Mammary epithelial cell (primary cell): ENCODE measurements at regions of chr19 and their contacts with region 1.

Region 1: GRCh38 chr19:57992841-57993240 is 9.8 kb downstream of the ZNF606 start:
- DNase-seq: no peak
- H3K4me3 ChIP-seq: no peak overlapping the region
- H3K27ac ChIP-seq: no peak overlapping the region
- H3K4me1 ChIP-seq: no peaks in the 10 kb centered on the region
- H3K27me3 ChIP-seq: no peaks in the 10 kb centered on the region
- CTCF ChIP-seq: no peak

Region 2: GRCh38 chr19:57888560-57889231 is 104.1 kb before region 1 on chr19 and contains the start of gene ZNF814:
- CTCF ChIA-PET with region 1: no interaction called
- dilution Hi-C with region 1: no loop called
- in situ Hi-C with region 1: no loop called
- intact Hi-C with region 1: no loop called
- DNase-seq: peak; percentile 74
- H3K4me3 ChIP-seq: peak within 1 kb of the TSS; percentile 71 to 81 (median 74)
- H3K27ac ChIP-seq: peak within 1 kb of the TSS; percentile 53
- H3K4me1 ChIP-seq: no peaks in the 10 kb centered on the region
- H3K27me3 ChIP-seq: no peaks in the 10 kb centered on the region
- CTCF ChIP-seq: peak in 1 of 2 donors; percentile 52
- total RNA-seq, gene ZNF814: 4.3 to 11.7 TPM

Region 3: GRCh38 chr19:57954996-57955395 is 37.8 kb before region 1 on chr19:
- CTCF ChIA-PET with region 1: no interaction called
- dilution Hi-C with region 1: no loop called
- in situ Hi-C with region 1: no loop called
- intact Hi-C with region 1: no loop called
- DNase-seq: no peak
- H3K4me3 ChIP-seq: no peak overlapping the region
- H3K27ac ChIP-seq: no peak overlapping the region
- H3K4me1 ChIP-seq: no peaks in the 10 kb centered on the region
- H3K27me3 ChIP-seq: no peaks in the 10 kb centered on the region
- CTCF ChIP-seq: no peak

Region 4: DNA sequence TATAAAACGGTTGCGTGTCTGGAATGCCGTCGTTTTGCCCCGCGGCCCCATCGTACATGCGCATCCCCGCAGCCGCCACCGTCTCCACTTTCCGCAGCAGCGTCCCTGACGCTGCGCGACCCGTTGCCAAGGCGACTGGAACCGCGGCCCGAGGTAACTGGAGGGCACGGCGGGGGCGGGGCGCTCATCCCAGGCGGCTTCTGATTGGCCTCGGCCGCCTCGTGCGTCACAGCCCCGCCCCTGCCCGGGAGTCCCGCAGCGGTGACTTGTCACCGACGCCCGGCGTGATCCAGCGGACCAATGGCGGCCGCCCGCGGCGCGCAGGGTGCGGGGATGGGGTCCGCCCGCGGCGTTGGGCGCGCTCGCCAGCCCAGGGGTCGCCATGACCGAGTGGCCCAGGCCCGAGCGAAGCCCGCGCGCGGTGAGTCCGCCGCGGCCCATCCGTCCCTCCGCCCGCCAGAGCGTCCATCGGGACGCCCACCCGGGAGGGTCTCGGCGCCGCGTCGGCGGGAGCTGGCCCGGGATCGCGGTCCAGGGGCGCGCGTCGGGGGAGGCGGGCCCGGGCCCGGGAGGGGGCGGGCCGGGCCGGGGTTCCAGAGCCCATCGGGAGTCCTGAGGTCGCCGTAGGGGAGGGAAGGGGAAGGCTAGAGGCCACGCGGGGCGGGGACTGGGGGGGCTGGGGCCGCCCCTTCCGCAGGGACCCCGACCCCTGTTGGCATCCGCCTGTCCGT is 41.1 kb after region 1 on chr19 and contains the start of gene ZSCAN1:
- CTCF ChIA-PET with region 1: no interaction called
- dilution Hi-C with region 1: no loop called
- in situ Hi-C with region 1: no loop called
- intact Hi-C with region 1: no loop called
- DNase-seq: peak; percentile 11
- H3K4me3 ChIP-seq: no peak within 1 kb of the TSS
- H3K27ac ChIP-seq: no peak within 1 kb of the TSS
- H3K4me1 ChIP-seq: no peaks in the 10 kb centered on the region
- H3K27me3 ChIP-seq: no peaks in the 10 kb centered on the region
- CTCF ChIP-seq: no peak
- total RNA-seq, gene ZSCAN1: not detected

Region 5: DNA sequence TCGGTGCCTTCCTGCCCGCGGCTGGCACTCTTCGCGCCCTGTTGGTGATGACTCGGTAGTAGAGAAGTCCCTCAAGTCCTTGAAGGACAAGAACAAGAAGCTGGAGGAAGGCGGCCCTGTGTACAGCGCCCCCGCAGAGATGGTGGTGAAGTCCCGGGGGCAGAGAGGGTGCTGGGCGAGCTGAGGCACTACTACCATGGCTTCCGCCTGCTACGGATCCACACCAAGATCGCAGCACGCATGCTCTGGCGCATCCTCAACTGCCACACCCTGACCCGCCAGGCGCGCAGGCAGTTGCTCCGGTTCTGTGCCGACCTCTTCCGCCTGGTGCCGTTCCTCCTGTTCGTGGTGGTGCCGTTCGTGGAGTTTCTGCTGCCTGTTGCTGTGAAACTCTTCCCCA is 52.0 kb after region 1 on chr19:
- CTCF ChIA-PET with region 1: no interaction called
- dilution Hi-C with region 1: loop called (anchors 5 kb)
- in situ Hi-C with region 1: no loop called
- intact Hi-C with region 1: no loop called
- DNase-seq: no peak
- H3K4me3 ChIP-seq: no peak overlapping the region
- H3K27ac ChIP-seq: no peak overlapping the region
- H3K4me1 ChIP-seq: no peaks in the 10 kb centered on the region
- H3K27me3 ChIP-seq: no peaks in the 10 kb centered on the region
- CTCF ChIP-seq: no peak

Region 6: DNA sequence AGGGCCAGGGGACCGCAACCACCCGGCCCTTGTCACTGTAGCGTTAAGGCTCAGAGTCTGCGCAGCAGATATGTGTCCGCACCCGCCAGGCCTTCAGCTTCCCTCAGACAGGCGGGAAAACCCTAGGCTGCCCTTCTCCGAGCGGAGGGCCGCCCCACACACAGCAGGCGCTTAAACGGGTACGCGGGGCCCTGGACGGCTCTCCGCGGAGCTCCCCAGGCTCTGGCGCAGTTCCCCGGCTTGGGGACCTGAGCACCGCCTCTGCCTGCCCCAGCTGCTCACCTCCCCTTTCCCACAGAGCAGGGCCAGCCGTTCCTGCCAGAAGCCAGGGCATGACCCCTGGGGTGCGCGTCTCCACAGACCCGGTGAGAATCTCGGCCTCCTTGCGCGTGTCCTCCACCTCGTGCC is 66.8 kb after region 1 on chr19:
- CTCF ChIA-PET with region 1: no interaction called
- dilution Hi-C with region 1: no loop called
- in situ Hi-C with region 1: no loop called
- intact Hi-C with region 1: loop called (anchors 2 kb)
- DNase-seq: no peak
- H3K4me3 ChIP-seq: peak overlapping the region in 1 of 3 experiments; percentile 25
- H3K27ac ChIP-seq: no peak overlapping the region
- H3K4me1 ChIP-seq: no peaks in the 10 kb centered on the region
- H3K27me3 ChIP-seq: no peaks in the 10 kb centered on the region
- CTCF ChIP-seq: no peak

Region 7: GRCh38 chr19:58079792-58080191 is 87.0 kb after region 1 on chr19:
- CTCF ChIA-PET with region 1: no interaction called
- dilution Hi-C with region 1: loop called (anchors 5 kb)
- in situ Hi-C with region 1: no loop called
- intact Hi-C with region 1: no loop called
- DNase-seq: no peak
- H3K4me3 ChIP-seq: no peak overlapping the region
- H3K27ac ChIP-seq: no peak overlapping the region
- H3K4me1 ChIP-seq: no peaks in the 10 kb centered on the region
- H3K27me3 ChIP-seq: no peaks in the 10 kb centered on the region
- CTCF ChIP-seq: no peak

Region 8: DNA sequence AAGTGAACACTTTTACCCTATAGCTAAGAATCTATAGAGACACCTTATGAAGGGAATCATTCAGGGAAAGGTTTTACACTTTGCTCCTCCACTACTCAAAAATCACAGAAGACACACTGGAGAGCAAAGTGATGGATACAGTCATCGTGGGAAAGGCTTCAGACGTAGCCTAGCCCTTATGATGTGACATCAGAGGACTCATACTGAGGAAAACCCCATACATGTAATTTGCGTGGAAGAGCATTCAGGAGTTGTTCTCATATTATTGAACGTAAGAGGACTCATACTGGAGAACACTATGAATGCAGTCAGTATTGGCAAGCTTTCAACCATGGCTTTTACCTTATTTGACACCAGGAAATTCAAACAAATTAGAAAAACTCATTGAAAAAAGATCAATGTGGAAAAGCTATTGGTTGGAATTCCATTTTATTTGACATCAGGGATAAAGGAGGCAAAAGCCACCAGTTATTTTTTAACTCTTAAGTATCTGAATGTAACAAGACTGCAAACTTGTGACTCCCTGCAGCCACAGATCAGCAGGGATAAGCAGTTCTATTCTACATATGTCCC is 174.0 kb after region 1 on chr19:
- CTCF ChIA-PET with region 1: no interaction called
- dilution Hi-C with region 1: loop called (anchors 5 kb)
- in situ Hi-C with region 1: no loop called
- intact Hi-C with region 1: no loop called
- DNase-seq: no peak
- H3K4me3 ChIP-seq: no peak overlapping the region
- H3K27ac ChIP-seq: no peak overlapping the region
- H3K4me1 ChIP-seq: no peaks in the 10 kb centered on the region
- H3K27me3 ChIP-seq: no peaks in the 10 kb centered on the region
- CTCF ChIP-seq: no peak